ENCODE measurements at regions of chr11 and their contacts with region 1.

Region 1: DNA sequence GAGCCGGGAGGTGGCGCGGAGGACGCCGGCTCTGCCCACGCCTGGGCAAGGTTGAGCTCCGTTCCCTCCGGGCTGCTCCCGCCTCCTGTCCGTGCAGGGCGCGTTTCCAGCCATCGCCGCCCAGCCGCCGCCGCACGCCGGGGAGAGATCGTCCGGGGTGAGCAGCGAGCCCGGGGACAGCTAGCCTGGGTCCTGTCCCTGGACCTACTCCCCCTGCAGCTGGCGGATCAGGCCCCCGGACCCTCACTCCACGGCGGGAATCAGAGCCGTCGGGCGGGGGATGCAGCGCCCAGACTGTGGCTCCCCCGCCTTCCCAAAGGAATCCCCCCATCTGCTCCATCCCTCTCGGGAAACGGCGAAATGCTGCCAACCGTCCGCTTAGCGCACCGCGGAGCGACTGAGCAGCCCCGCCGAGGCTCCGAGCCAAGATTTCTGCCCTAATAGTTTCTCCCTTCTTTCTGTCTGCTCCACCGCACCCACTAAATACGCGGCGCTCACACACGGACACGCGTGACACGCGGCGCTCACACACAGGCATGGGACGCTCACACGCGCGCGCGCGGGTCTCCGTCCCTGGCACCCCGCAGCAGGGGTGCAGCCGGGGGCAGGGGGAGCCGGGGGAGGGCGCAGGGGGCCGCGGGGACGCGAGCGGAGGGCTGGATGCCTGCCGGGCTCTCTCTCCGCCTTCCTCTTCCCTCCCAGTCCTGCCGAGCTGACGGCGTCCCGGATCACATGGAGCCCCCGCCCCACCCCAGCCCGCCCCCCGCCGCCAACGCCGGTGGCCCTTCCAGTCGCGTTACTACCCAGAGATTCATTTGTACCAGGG is at the start of gene KCNJ5:
- DNase-seq: no peak
- H3K4me3 ChIP-seq: peak within 1 kb of the TSS; percentile 76 to 77
- H3K27ac ChIP-seq: no peak within 1 kb of the TSS
- H3K4me1 ChIP-seq: peaks cover 8 to 9% of the 10 kb centered on the region in 2 donors
- H3K27me3 ChIP-seq: no peaks in the 10 kb centered on the region
- CTCF ChIP-seq: no peak
- total RNA-seq, gene KCNJ5: 0.53 TPM

Region 2: GRCh38 chr11:128905345-128906184 is 14.8 kb after region 1 on chr11:
- intact Hi-C with region 1: loop called (anchors 2 kb)
- DNase-seq: no peak
- H3K4me3 ChIP-seq: peak overlapping the region; percentile 74 to 83
- H3K27ac ChIP-seq: peak overlapping the region; percentile 63 to 72
- H3K4me1 ChIP-seq: peaks cover 0 to 22% of the 10 kb centered on the region in 2 donors
- H3K27me3 ChIP-seq: no peaks in the 10 kb centered on the region
- CTCF ChIP-seq: peak in 2 of 3 experiments; percentile 34 to 48

Region 3: DNA sequence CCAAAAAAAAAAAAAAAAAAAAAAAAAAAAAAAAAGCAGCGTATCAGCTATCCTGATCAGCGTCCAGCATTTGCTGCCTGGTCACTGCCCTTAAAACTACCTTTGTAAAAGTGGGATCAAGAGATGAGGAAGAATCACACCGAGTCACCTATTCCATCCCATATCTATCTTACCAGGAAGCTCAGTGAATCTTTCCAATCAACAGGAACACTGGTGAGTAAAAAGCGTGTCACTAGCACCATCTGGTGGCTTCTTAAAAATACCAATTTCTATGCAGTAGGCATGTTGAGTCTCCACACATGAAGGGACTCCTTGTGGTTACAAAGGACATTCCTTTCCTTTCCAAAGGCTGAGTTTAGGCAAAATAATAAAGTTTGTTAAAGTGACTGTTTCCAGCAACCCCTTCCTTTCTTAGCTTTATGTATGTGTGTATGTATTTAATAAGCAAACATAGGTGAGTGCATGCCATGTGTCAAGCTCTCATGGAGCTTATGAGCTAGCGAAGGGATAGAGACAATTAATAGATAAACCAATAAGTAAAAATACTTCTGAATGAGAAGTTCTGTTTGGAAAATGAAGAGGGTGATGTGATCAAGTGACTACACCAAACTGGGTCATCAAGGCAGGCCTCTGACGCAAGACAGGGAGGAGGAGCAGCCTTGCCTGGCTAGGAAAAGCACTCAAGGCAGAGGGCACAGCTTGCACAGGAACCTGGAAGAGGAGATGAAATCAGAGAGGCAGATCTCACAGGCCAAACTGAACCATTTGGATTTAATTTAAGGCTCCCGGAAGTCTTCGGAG is 65.8 kb after region 1 on chr11:
- intact Hi-C with region 1: no loop called
- DNase-seq: no peak
- H3K4me3 ChIP-seq: no peak overlapping the region
- H3K27ac ChIP-seq: no peak overlapping the region
- H3K4me1 ChIP-seq: no peaks in the 10 kb centered on the region
- H3K27me3 ChIP-seq: no peaks in the 10 kb centered on the region
- CTCF ChIP-seq: peak; percentile 54 to 74 (median 64)

Region 4: DNA sequence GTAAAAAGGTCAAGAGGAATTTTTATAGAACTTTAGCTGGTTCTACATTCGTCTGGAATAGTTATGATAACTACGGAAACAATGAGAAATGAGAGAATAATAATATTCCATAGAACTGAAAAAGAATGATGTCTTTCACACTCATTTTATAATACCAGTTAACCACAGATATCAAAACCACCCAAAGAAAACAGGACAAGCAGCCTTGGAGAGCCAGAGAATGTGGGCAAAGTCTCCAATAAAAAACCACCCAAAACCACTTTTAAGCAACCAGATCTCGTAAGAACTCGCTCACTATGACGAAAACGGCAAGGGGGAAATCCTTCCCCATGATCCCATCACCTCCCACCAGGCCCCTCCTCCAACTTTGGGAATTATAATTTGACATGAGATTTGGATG is 240.6 kb after region 1 on chr11:
- intact Hi-C with region 1: no loop called
- DNase-seq: no peak
- H3K4me3 ChIP-seq: no peak overlapping the region
- H3K27ac ChIP-seq: no peak overlapping the region
- H3K4me1 ChIP-seq: no peaks in the 10 kb centered on the region
- H3K27me3 ChIP-seq: no peaks in the 10 kb centered on the region
- CTCF ChIP-seq: no peak

Region 5: GRCh38 chr11:129143335-129143734 is 252.6 kb after region 1 on chr11:
- intact Hi-C with region 1: loop called (anchors 10 kb)
- DNase-seq: peak; percentile 71 to 94
- H3K4me3 ChIP-seq: no peak overlapping the region
- H3K27ac ChIP-seq: no peak overlapping the region
- H3K4me1 ChIP-seq: peaks cover 0 to 2% of the 10 kb centered on the region in 2 donors
- H3K27me3 ChIP-seq: no peaks in the 10 kb centered on the region
- CTCF ChIP-seq: no peak